A673 (cell line): ENCODE measurements at regions of chr4 and their contacts with region 1.

Region 1: GRCh38 chr4:98260579-98261290 is 449 bp upstream of the RAP1GDS1 start:
- DNase-seq: peak; percentile 98
- H3K4me3 ChIP-seq: peak overlapping the region; percentile 78
- H3K27ac ChIP-seq: peak overlapping the region; percentile 94
- H3K4me1 ChIP-seq: peaks cover 7% of the 10 kb centered on the region
- H3K27me3 ChIP-seq: no peaks in the 10 kb centered on the region
- CTCF ChIP-seq: no peak

Region 2: GRCh38 chr4:98557194-98557892 is 296.6 kb after region 1 on chr4:
- CTCF ChIA-PET with region 1: no interaction called
- POLR2A ChIA-PET with region 1: no interaction called
- intact Hi-C with region 1: loop called (anchors 10 kb)
- DNase-seq: peak; percentile 79
- H3K4me3 ChIP-seq: no peak overlapping the region
- H3K27ac ChIP-seq: peak overlapping the region; percentile 73
- H3K4me1 ChIP-seq: peaks cover 66% of the 10 kb centered on the region
- H3K27me3 ChIP-seq: no peaks in the 10 kb centered on the region
- CTCF ChIP-seq: no peak